ENCODE measurements at regions of chr2 and their contacts with region 1.

Region 1: GRCh38 chr2:218671654-218672566 is at the starts of genes RNF25 and STK36:
- DNase-seq: peak; percentile 82
- H3K4me3 Mint-ChIP-seq: peak within 1 kb of the TSS; percentile 88
- H3K27ac Mint-ChIP-seq: peak within 1 kb of the TSS; percentile 68
- H3K4me1 Mint-ChIP-seq: peaks cover 16% of the 10 kb centered on the region
- H3K27me3 Mint-ChIP-seq: no peaks in the 10 kb centered on the region
- CTCF ChIP-seq: no peak
- total RNA-seq, gene RNF25: 32.1 and 36.9 TPM in 2 replicates
- total RNA-seq, gene STK36: 42.4 and 50.6 TPM in 2 replicates

Region 2: DNA sequence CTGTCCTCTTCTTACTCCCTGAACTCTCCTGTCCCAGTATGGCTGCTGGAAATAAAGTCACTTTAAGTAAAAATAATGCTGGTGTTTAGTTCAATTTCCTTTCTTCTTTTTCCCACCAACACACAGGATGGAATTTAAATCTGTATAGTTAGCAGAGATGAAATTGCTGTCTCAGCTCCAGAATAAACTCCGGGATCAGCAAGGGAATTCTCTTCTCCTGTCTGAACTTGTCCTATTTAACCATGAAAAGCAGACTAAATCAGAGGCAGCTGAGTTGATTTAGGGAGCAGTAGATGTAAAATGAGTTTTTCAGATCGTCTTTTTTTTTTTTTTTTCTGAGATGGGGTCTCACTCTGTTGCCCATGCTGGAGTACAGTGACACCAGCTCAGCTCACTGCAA is 64.6 kb after region 1 on chr2:
- CTCF ChIA-PET with region 1: interaction called, 12 read pairs
- intact Hi-C with region 1: no loop called
- DNase-seq: no peak
- H3K4me3 Mint-ChIP-seq: no peak overlapping the region
- H3K27ac Mint-ChIP-seq: no peak overlapping the region
- H3K4me1 Mint-ChIP-seq: peaks cover 34% of the 10 kb centered on the region
- H3K27me3 Mint-ChIP-seq: no peaks in the 10 kb centered on the region
- CTCF ChIP-seq: no peak